Testis (tissue), 5 donors: ENCODE measurements at regions of chr3 and their contacts with region 1.

Region 1: GRCh38 chr3:140719841-140720614 is 42.2 kb downstream of the TRIM42 start:
- DNase-seq: peak; percentile 83
- H3K4me3 ChIP-seq: no peak overlapping the region
- H3K27ac ChIP-seq: peak overlapping the region; percentile 33 to 41
- H3K4me1 ChIP-seq: peaks cover 33% of the 10 kb centered on the region
- H3K27me3 ChIP-seq: no peaks in the 10 kb centered on the region
- CTCF ChIP-seq: no peak
- POLR2A ChIP-seq: no peak

Region 2: DNA sequence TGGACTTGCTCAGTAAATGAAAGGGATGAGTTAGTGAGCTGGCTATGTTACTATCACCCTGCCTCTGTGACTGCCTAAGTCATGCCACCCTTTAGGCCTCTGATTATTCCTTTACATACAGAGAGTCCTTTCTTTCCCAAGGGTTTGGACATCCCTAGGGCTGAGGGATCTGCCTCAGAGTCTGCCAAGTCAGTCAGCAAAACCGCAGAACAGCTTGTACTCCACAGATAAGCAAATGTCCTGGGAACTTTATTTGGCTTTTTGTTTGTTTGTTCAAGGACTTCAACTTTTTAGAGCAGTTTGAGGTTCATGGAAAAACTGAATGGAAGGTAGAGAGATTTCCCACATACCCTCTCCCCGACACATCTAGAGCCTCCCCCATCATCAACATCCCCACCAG is 124.7 kb before region 1 on chr3:
- intact Hi-C with region 1: loop called (anchors 10 kb)
- DNase-seq: peak; percentile 82
- H3K4me3 ChIP-seq: no peak overlapping the region
- H3K27ac ChIP-seq: peak overlapping the region in 1 of 2 donors; percentile 77
- H3K4me1 ChIP-seq: peaks cover 38% of the 10 kb centered on the region
- H3K27me3 ChIP-seq: no peaks in the 10 kb centered on the region
- CTCF ChIP-seq: no peak
- POLR2A ChIP-seq: no peak